PC-3 (cell line): ENCODE measurements at regions of chr15 and their contacts with region 1.

Region 1: GRCh38 chr15:93830181-93831080 is 400.9 kb upstream of the MCTP2 start:
- DNase-seq: no peak
- ATAC-seq: no peak
- H3K4me3 ChIP-seq: no peak overlapping the region
- H3K27ac ChIP-seq: no peak overlapping the region
- H3K4me1 ChIP-seq: no peaks in the 10 kb centered on the region
- H3K27me3 ChIP-seq: no peaks in the 10 kb centered on the region
- CTCF ChIP-seq: no peak

Region 2: DNA sequence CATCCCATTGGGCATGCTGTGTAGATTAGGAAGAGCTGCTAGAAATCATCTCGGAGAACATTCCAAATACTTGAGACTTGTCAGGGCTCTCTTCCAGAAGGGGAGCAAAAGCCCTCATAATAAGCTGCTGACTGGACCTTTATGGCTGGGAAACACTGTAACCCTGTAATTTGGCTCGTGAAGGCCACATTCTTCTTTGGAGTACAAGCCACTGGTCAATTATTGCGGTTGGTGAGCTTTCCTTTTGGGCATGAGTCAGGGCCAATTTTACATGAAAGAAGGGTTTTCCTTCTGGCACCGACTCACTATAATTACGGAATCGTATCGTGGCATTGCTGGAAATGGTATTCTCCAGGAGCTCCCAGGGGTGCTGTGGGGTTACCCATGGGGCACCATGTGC is 306.9 kb before region 1 on chr15:
- CTCF ChIA-PET with region 1: no interaction called
- POLR2A ChIA-PET with region 1: no interaction called
- intact Hi-C with region 1: loop called (anchors 10 kb)
- DNase-seq: no peak
- ATAC-seq: no peak
- H3K4me3 ChIP-seq: no peak overlapping the region
- H3K27ac ChIP-seq: no peak overlapping the region
- H3K4me1 ChIP-seq: no peaks in the 10 kb centered on the region
- H3K27me3 ChIP-seq: 0 out of 2 replicates have a peak, but pooled peaks cover 10% of the 10 kb centered on the region
- CTCF ChIP-seq: no peak